Right cardiac atrium (tissue), 5 donors: ENCODE measurements at regions of chr2 and their contacts with region 1.

Region 1: GRCh38 chr2:98749066-98749450 is 18.1 kb upstream of the MGAT4A start:
- DNase-seq: no peak
- ATAC-seq: peak; percentile 68 to 81
- H3K4me3 ChIP-seq: no peak overlapping the region
- H3K27ac ChIP-seq: no peak overlapping the region
- H3K4me1 ChIP-seq: no peaks in the 10 kb centered on the region
- H3K27me3 ChIP-seq: no peaks in the 10 kb centered on the region

Region 2: DNA sequence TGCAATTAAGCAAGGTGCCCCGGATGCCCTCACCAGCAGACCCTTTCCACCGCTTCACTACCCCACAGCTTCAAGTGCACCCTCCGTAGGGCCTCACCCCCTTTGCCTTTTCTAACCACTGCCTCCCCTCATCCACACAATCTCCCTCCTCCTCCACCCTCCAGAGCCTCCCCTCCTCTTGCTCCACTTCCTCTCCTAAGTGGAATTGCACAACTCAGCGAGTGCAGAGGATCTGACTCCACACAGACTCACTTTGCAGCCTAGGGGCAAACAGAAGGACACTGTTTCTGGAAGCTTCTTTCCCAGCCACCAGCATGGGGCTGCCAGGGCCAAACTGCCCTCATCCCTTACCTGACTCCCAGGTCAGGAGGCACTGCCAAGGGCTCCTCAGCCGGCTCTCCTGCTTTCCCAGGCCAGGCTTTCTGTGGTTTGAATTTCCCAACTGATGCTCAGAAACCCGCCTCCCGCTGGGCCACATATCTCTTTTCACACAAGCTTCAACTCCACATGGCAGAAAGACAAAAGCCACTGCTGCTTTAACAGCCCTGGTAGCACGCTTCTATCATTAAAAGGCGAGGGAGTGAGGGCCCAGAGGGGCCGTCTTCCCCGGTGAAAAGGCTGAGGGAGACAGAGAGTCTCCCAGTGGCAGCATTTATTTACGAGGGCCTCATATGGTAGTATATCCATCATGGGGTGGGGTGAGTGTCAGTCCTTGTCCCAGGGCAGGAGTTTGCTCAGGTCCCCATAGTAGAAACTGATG is 56.5 kb after region 1 on chr2:
- intact Hi-C with region 1: loop called in 1 of 4 experiments (anchors 10 kb)
- DNase-seq: no peak
- ATAC-seq: peak; percentile 58 to 65
- H3K4me3 ChIP-seq: no peak overlapping the region
- H3K27ac ChIP-seq: peak overlapping the region; percentile 13
- H3K4me1 ChIP-seq: peaks cover 14% of the 10 kb centered on the region
- H3K27me3 ChIP-seq: no peaks in the 10 kb centered on the region

Region 3: DNA sequence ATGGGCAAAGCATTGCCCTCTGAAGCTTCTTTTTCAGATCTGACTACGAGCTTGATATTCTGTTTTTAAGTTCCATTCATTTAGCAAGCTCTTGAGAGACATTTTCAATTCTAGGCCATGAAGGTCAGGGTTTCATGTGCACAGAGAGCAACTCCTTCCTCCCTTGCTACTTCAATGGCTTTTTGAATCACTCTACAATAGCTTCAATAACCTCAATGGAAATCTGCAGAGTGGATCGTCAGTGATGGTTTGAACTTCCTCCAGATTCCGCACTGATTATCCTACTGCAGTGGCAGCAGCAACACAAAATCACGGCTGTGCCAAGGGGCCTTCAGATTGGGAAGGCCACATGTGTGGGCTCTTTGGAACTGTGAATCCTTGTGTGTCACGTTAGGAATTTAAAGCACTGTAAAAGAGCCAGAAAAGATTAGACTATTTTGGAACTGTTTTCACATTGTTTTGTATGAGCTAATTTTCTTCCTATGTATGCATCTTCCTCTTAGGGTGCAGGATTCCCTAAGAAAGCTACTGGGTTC is 70.2 kb after region 1 on chr2:
- intact Hi-C with region 1: no loop called
- DNase-seq: peak in 1 of 3 donors; percentile 43
- ATAC-seq: no peak
- H3K4me3 ChIP-seq: no peak overlapping the region
- H3K27ac ChIP-seq: no peak overlapping the region
- H3K4me1 ChIP-seq: peaks cover 11% of the 10 kb centered on the region
- H3K27me3 ChIP-seq: no peaks in the 10 kb centered on the region

Region 4: GRCh38 chr2:98846041-98846440 is 97.0 kb after region 1 on chr2:
- intact Hi-C with region 1: no loop called
- DNase-seq: no peak
- ATAC-seq: no peak
- H3K4me3 ChIP-seq: no peak overlapping the region
- H3K27ac ChIP-seq: no peak overlapping the region
- H3K4me1 ChIP-seq: no peaks in the 10 kb centered on the region
- H3K27me3 ChIP-seq: no peaks in the 10 kb centered on the region